A549 (cell line): ENCODE measurements at regions of chr7 and their contacts with region 1.

Region 1: GRCh38 chr7:23431702-23432199 is 38.5 kb downstream of the IGF2BP3 start:
- DNase-seq: peak in 1 of 2 experiments; percentile 20
- ATAC-seq: no peak
- H3K4me3 ChIP-seq: no peak overlapping the region
- H3K27ac ChIP-seq: peak overlapping the region; percentile 64 to 78; a peak in 5 of 6 replicates
- H3K4me1 ChIP-seq: peaks cover 42% of the 10 kb centered on the region
- CTCF ChIP-seq: no peak
- EP300 ChIP-seq: no peak
- POLR2A ChIP-seq: no peak
- RAD21 ChIP-seq: no peak

Region 2: DNA sequence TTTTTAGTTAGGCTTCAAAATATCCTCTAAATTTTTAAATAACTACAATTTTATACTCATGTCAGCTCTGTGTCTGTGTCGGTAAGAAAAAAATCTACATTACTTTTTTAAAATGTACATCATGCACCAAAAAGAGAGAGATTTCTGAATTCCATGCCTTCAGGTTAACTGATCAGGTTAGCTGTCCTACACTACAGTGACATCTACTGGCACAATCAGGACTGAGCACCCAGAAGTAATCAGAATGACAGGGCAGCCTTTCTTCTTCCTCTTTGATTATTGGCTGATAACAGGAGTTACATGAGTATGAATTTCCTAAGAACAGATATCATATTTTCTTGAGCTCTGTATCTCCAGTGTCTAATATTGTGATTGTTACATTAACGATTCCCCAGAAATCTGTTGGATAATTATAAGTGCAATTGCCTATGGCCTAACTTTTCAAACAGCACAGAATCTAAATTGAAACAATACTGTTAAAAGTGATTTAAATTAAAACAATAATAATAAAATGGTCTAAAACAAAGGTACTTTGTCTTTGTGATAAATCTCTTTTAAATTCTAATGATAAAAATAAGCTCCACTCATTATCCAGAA is 376.1 kb before region 1 on chr7:
- CTCF ChIA-PET with region 1: no interaction called
- POLR2A ChIA-PET with region 1: no interaction called
- DNase-seq: peak; percentile 38 to 73
- ATAC-seq: peak; percentile 90 to 98
- H3K4me3 ChIP-seq: no peak overlapping the region
- H3K27ac ChIP-seq: no peak overlapping the region
- H3K4me1 ChIP-seq: no peaks in the 10 kb centered on the region
- CTCF ChIP-seq: peak; percentile 94
- EP300 ChIP-seq: no peak
- POLR2A ChIP-seq: no peak
- RAD21 ChIP-seq: peak; percentile 92 to 95

Region 3: GRCh38 chr7:23234569-23235296 is 197.0 kb before region 1 on chr7:
- CTCF ChIA-PET with region 1: no interaction called
- POLR2A ChIA-PET with region 1: no interaction called
- DNase-seq: no peak
- ATAC-seq: 0 out of 6 replicates have a peak, but pooled peaks of 1 of the 2 experiments have one; percentile 14
- H3K4me3 ChIP-seq: no peak overlapping the region
- H3K27ac ChIP-seq: no peak overlapping the region
- H3K4me1 ChIP-seq: no peaks in the 10 kb centered on the region
- CTCF ChIP-seq: no peak
- EP300 ChIP-seq: no peak
- POLR2A ChIP-seq: no peak
- RAD21 ChIP-seq: no peak

Region 4: GRCh38 chr7:23254051-23254681 is 177.6 kb before region 1 on chr7:
- CTCF ChIA-PET with region 1: no interaction called
- POLR2A ChIA-PET with region 1: no interaction called
- DNase-seq: no peak
- ATAC-seq: peak; percentile 27 to 56; a peak in 3 of 6 replicates
- H3K4me3 ChIP-seq: no peak overlapping the region
- H3K27ac ChIP-seq: no peak overlapping the region
- H3K4me1 ChIP-seq: no peaks in the 10 kb centered on the region
- CTCF ChIP-seq: no peak
- EP300 ChIP-seq: no peak
- POLR2A ChIP-seq: no peak
- RAD21 ChIP-seq: no peak

Region 5: GRCh38 chr7:23357190-23358093 is 74.3 kb before region 1 on chr7:
- CTCF ChIA-PET with region 1: interaction called, 19 read pairs
- POLR2A ChIA-PET with region 1: interaction called, 4 read pairs
- DNase-seq: peak; percentile 86 to 87
- ATAC-seq: peak; percentile 91 to 96
- H3K4me3 ChIP-seq: no peak overlapping the region
- H3K27ac ChIP-seq: peak overlapping the region; percentile 62
- H3K4me1 ChIP-seq: peaks cover 37% of the 10 kb centered on the region
- CTCF ChIP-seq: peak; percentile 78
- EP300 ChIP-seq: peak; percentile 57 to 67; a peak in 3 of 5 replicates
- POLR2A ChIP-seq: no peak
- RAD21 ChIP-seq: peak; percentile 62 to 85

Region 6: DNA sequence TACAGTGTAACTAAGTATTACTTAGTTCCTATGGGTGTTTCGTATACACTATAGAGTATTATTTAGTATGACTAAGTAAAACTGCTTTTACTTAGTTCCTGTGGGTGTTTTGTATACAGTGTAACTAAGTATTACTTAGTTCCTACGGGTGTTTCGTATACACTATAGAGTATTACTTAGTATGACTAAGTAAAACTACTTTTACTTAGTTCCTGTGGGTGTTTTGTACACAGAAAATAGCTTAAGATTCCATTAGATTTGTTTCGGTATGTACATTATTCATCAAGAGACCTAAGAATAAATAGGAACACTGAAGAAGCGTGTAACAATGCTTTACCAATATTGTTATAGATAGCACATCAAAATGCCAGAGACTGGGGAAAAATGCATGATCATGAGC is 13.6 kb after region 1 on chr7:
- CTCF ChIA-PET with region 1: interaction called, 24 read pairs
- POLR2A ChIA-PET with region 1: no interaction called
- DNase-seq: no peak
- ATAC-seq: peak in 1 of 2 experiments; percentile 56; a peak in 3 of 6 replicates
- H3K4me3 ChIP-seq: no peak overlapping the region
- H3K27ac ChIP-seq: no peak overlapping the region
- H3K4me1 ChIP-seq: peaks cover 23% of the 10 kb centered on the region; the same call in 2 of the 3 replicates
- CTCF ChIP-seq: no peak
- EP300 ChIP-seq: no peak
- POLR2A ChIP-seq: no peak
- RAD21 ChIP-seq: no peak

Region 7: GRCh38 chr7:23462846-23463245 is 31.1 kb after region 1 on chr7:
- CTCF ChIA-PET with region 1: interaction called, 21 read pairs
- POLR2A ChIA-PET with region 1: no interaction called
- DNase-seq: peak in 1 of 2 experiments; percentile 45
- ATAC-seq: no peak
- H3K4me3 ChIP-seq: no peak overlapping the region
- H3K27ac ChIP-seq: 0 out of 6 replicates have a peak overlapping the region, but pooled peaks of 1 of the 2 experiments have one; percentile 2
- H3K4me1 ChIP-seq: peaks cover 46% of the 10 kb centered on the region
- CTCF ChIP-seq: peak; percentile 39
- EP300 ChIP-seq: no peak
- POLR2A ChIP-seq: no peak
- RAD21 ChIP-seq: peak; percentile 47 to 55; a peak in 4 of 5 replicates

Region 8: DNA sequence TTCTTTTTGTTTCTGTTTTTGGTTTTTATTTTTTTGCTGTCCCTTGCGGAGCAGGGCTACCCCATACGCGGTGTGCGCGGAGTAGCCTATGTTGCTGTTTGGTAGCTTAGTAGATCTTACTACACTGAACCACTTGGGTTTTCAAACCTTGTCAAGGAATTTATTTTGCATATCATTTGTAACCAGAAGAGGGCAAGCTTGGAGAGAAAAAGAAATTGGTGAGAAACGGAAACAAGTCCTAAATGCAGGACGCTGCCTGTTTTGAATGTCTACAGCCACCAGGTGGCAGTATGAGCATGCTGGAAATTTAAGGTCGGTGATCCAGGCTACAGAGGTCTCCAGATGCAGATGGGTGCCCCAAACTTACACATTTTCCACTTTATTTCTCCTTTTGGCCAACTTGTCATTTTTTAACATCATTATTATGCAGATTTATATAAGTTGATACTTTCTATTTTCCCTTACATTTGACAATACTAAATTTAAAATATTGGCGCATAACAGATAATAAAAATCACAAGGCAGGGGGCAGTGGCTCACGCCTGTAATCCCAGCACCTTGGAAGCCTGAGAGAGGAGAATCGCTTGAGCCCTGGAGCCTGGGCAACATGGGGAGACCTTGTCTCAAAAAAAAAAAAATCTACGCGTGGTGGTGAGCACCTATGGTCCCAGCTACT is 115.3 kb after region 1 on chr7:
- CTCF ChIA-PET with region 1: interaction called, 16 read pairs
- POLR2A ChIA-PET with region 1: no interaction called
- DNase-seq: peak; percentile 86 to 93
- ATAC-seq: peak; percentile 92 to 94
- H3K4me3 ChIP-seq: no peak overlapping the region
- H3K27ac ChIP-seq: 0 out of 6 replicates have a peak overlapping the region, but pooled peaks of 1 of the 2 experiments have one; percentile 13
- H3K4me1 ChIP-seq: no peaks in the 10 kb centered on the region
- CTCF ChIP-seq: peak; percentile 99
- EP300 ChIP-seq: no peak
- POLR2A ChIP-seq: no peak
- RAD21 ChIP-seq: peak; percentile 92

Region 9: GRCh38 chr7:23645822-23646221 is 214.1 kb after region 1 on chr7:
- CTCF ChIA-PET with region 1: no interaction called
- POLR2A ChIA-PET with region 1: no interaction called
- DNase-seq: no peak
- ATAC-seq: no peak
- H3K4me3 ChIP-seq: no peak overlapping the region
- H3K27ac ChIP-seq: no peak overlapping the region
- H3K4me1 ChIP-seq: no peaks in the 10 kb centered on the region
- CTCF ChIP-seq: no peak
- EP300 ChIP-seq: no peak
- POLR2A ChIP-seq: no peak
- RAD21 ChIP-seq: no peak